IMR-90 (cell line): ENCODE measurements at regions of chr9 and their contacts with region 1.

Region 1: DNA sequence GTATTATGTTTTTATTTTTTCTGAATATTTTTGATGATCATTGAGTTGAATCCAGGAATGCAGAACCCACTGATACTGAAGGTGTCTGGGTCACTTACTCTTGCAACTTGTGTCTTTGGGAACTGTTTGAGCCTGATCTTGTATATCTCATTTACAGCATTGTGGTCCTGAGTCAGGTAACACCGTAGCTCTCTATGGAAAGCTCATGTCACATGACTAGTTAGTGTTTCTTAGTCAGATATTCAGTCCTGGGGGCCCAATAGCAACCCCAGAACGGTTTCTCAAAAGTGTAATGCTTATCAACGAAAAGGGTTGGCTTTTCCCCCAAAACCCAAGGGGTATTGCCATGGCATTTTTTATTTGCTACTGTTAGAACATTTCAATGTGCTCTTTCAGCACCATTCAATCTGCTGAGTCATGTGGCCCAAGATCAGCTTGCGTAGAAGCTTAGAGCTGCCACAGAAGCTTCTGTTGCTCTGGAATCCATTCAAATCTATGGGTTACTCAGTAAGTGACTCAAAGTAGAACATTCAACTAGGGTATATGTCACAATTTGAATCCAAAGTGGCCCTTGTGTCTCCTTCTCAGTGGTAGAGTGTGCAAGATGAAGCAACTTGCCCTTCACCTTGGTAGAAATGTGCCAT is 12.1 kb upstream of the PTAR1 start:
- DNase-seq: peak; percentile 90
- ATAC-seq: peak; percentile 63
- H3K4me3 ChIP-seq: no peak overlapping the region
- H3K27ac ChIP-seq: no peak overlapping the region
- H3K4me1 ChIP-seq: peaks cover 5% of the 10 kb centered on the region; the same call in 1 of the 2 replicates
- H3K27me3 ChIP-seq: no peaks in the 10 kb centered on the region
- CTCF ChIP-seq: no peak
- POLR2A ChIP-seq: no peak
- RAD21 ChIP-seq: no peak

Region 2: DNA sequence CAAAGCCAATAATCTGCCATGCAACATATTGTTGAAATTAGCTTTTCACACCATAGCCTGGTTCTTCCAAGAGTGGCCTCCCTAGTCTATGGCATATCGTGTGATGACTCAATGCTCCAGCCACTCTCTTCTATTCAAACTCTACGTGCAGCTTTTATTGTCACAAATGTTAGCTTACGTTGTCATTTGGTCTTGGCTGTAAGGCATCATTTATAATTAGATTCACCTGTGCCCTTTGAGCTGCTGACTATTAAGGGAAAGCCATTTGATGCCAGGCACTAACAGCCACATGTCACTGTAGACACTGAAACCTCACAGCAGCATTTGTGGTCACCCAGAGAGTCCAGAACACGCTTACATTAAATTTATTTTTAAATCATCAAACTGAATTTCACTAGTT is 166.5 kb before region 1 on chr9:
- CTCF ChIA-PET with region 1: no interaction called
- POLR2A ChIA-PET with region 1: no interaction called
- dilution Hi-C with region 1: no loop called
- in situ Hi-C with region 1: no loop called
- intact Hi-C with region 1: no loop called
- DNase-seq: no peak
- ATAC-seq: no peak
- H3K4me3 ChIP-seq: no peak overlapping the region
- H3K27ac ChIP-seq: no peak overlapping the region
- H3K4me1 ChIP-seq: no peaks in the 10 kb centered on the region
- H3K27me3 ChIP-seq: no peaks in the 10 kb centered on the region
- CTCF ChIP-seq: no peak
- POLR2A ChIP-seq: no peak
- RAD21 ChIP-seq: no peak

Region 3: DNA sequence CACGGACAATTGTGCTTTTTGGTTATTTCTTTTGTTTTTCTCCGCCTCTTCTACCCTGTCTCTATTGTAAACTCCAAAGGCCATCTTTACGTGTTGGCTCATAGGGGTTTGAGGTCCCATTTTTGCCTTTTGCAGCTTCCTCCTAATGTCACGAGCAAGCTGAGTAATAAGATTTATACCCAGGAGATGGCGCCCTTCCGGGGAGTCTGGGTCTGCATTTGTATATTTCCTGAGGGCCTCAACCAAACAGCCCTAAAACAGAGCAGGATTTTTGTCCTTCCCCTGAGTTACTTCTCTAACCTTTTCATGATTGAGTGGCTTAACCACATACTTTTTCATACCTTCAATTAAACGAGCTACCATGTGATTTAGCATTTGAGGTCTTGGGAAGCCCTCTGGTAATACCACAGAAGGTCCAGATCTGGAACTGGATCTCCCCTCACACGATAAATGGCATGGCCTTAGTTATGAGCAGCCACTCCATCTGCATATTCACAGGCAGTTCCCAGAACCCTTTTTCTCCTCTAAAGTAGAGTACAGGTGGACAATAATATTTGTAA is 37.5 kb after region 1 on chr9:
- CTCF ChIA-PET with region 1: no interaction called
- POLR2A ChIA-PET with region 1: no interaction called
- dilution Hi-C with region 1: no loop called
- in situ Hi-C with region 1: loop called (anchors 5 kb)
- intact Hi-C with region 1: no loop called
- DNase-seq: peak; percentile 21
- ATAC-seq: no peak
- H3K4me3 ChIP-seq: no peak overlapping the region
- H3K27ac ChIP-seq: no peak overlapping the region
- H3K4me1 ChIP-seq: no peaks in the 10 kb centered on the region
- H3K27me3 ChIP-seq: peaks cover 7% of the 10 kb centered on the region
- CTCF ChIP-seq: peak; percentile 50
- POLR2A ChIP-seq: no peak
- RAD21 ChIP-seq: peak; percentile 51

Region 4: DNA sequence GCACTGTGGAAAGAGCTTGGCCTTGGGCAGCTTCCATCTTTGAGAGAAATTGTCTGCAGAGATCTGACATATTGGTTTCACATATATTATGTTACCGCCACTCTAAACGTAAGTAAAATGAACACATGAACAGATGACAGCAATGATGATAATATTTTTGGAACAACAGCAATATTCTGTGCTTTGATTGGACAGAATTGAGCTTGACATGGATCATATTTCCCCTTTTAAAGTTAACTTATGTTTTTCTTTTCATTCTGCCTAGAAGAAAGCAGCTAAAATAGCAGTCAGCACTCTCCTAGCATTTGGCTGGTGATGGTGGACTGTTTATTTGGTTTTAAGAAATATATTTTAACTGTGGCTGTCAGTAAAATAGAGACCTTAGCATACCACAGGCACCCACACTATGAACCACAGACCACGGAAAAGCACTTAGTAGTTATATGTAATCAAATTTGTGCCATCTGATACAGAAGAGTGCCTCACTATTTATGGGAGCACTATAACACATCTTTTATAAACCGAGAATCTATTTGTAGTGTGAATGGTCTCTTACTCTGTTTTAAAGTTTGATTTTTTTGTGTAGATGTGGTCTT is 47.0 kb after region 1 on chr9:
- CTCF ChIA-PET with region 1: no interaction called
- POLR2A ChIA-PET with region 1: no interaction called
- dilution Hi-C with region 1: no loop called
- in situ Hi-C with region 1: no loop called
- intact Hi-C with region 1: loop called (anchors 5 kb)
- DNase-seq: peak; percentile 41
- ATAC-seq: no peak
- H3K4me3 ChIP-seq: no peak overlapping the region
- H3K27ac ChIP-seq: no peak overlapping the region
- H3K4me1 ChIP-seq: peaks cover 3% of the 10 kb centered on the region; the same call in 1 of the 2 replicates
- H3K27me3 ChIP-seq: peaks cover 14% of the 10 kb centered on the region
- CTCF ChIP-seq: no peak
- POLR2A ChIP-seq: no peak
- RAD21 ChIP-seq: no peak

Region 5: GRCh38 chr9:69900406-69900805 is 128.5 kb after region 1 on chr9:
- CTCF ChIA-PET with region 1: no interaction called
- POLR2A ChIA-PET with region 1: no interaction called
- dilution Hi-C with region 1: no loop called
- in situ Hi-C with region 1: loop called (anchors 10 kb)
- intact Hi-C with region 1: no loop called
- DNase-seq: peak; percentile 56
- ATAC-seq: peak; percentile 53
- H3K4me3 ChIP-seq: no peak overlapping the region
- H3K27ac ChIP-seq: no peak overlapping the region
- H3K4me1 ChIP-seq: peaks cover 15% of the 10 kb centered on the region
- H3K27me3 ChIP-seq: no peaks in the 10 kb centered on the region
- CTCF ChIP-seq: no peak
- POLR2A ChIP-seq: no peak
- RAD21 ChIP-seq: no peak